A549 (cell line): ENCODE measurements at regions of chr12 and their contacts with region 1.

Region 1: DNA sequence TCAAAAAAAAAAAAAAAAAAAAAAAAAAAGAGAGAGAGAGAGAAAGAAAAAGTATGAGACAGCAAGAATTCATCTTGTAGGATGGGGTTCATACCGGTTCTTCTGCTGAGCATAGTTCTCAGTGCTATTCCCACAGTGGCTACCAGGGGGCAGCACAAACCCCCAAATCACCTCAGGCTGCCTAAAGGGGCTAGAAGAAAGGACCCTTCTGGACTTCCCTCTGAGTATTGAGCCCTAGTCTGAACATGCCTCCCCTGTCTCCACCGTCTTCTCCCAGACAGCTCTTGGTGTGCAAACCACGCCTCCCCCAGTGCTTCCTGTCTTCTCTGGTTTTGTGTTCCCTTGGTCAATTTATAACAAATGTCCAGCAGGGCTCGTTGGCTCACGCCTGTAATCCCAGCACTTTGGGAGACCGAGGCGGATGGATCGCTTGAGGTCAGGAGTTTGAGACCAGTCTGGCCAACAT is 31.3 kb upstream of the SMUG1 start:
- DNase-seq: peak; percentile 61 to 81
- ATAC-seq: peak; percentile 67 to 74
- H3K4me3 ChIP-seq: peak overlapping the region; percentile 27; the same call in 1 of the 3 replicates
- H3K27ac ChIP-seq: peak overlapping the region; percentile 37 to 66; a peak in 5 of 6 replicates
- H3K4me1 ChIP-seq: peaks cover 24% of the 10 kb centered on the region
- CTCF ChIP-seq: peak; percentile 81
- EP300 ChIP-seq: no peak
- POLR2A ChIP-seq: no peak
- RAD21 ChIP-seq: peak; percentile 79 to 82

Region 2: GRCh38 chr12:53999559-54000104 is 220.5 kb before region 1 on chr12:
- CTCF ChIA-PET with region 1: interaction called, 113 read pairs
- POLR2A ChIA-PET with region 1: no interaction called
- DNase-seq: peak; percentile 82 to 92
- ATAC-seq: peak; percentile 30 to 64; a peak in 5 of 6 replicates
- H3K4me3 ChIP-seq: peak overlapping the region; percentile 83
- H3K27ac ChIP-seq: peak overlapping the region; percentile 93 to 96
- H3K4me1 ChIP-seq: peaks cover 14% of the 10 kb centered on the region
- CTCF ChIP-seq: no peak
- EP300 ChIP-seq: no peak
- POLR2A ChIP-seq: no peak
- RAD21 ChIP-seq: no peak

Region 3: GRCh38 chr12:54207484-54208294 is 12.4 kb before region 1 on chr12:
- CTCF ChIA-PET with region 1: interaction called, 92 read pairs
- POLR2A ChIA-PET with region 1: no interaction called
- DNase-seq: peak; percentile 80 to 81
- ATAC-seq: peak; percentile 81 to 95
- H3K4me3 ChIP-seq: no peak overlapping the region
- H3K27ac ChIP-seq: no peak overlapping the region
- H3K4me1 ChIP-seq: no peaks in the 10 kb centered on the region
- CTCF ChIP-seq: peak; percentile 81
- EP300 ChIP-seq: no peak
- POLR2A ChIP-seq: no peak
- RAD21 ChIP-seq: peak; percentile 83 to 92

Region 4: DNA sequence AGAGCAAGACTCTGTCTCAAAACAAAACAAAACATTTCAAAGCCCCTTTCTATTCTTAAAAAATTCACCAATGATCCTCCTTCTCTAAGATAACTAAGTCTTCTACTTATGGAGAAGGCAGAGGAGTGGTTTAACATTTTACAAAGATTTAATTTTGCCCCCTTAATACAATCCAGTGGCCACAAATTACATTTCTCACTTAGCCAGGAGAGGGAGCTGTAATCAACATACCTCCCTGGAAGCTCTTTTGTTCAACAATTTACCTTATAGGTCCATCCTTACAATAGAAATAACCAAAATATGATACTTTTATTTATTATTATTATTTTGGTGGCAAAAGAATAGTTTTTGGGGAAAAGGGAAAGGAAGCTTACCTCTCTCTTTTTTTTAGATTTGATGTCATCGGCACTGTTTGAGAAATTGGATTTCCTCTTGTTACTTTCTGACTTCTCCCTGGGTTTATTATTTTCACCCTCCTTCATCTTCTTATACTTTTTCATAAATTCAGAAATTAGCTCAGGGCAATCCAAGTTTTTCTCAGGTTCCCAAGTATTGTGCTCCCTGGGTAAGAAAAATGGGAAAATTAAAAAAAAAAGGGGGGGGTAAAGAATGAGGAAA is 31.7 kb after region 1 on chr12:
- CTCF ChIA-PET with region 1: interaction called, 10 read pairs
- POLR2A ChIA-PET with region 1: interaction called, 9 read pairs
- DNase-seq: peak; percentile 51 to 69
- ATAC-seq: peak; percentile 73 to 86
- H3K4me3 ChIP-seq: no peak overlapping the region
- H3K27ac ChIP-seq: no peak overlapping the region
- H3K4me1 ChIP-seq: no peaks in the 10 kb centered on the region
- CTCF ChIP-seq: peak; percentile 80
- EP300 ChIP-seq: no peak
- POLR2A ChIP-seq: no peak
- RAD21 ChIP-seq: peak; percentile 64 to 65

Region 5: DNA sequence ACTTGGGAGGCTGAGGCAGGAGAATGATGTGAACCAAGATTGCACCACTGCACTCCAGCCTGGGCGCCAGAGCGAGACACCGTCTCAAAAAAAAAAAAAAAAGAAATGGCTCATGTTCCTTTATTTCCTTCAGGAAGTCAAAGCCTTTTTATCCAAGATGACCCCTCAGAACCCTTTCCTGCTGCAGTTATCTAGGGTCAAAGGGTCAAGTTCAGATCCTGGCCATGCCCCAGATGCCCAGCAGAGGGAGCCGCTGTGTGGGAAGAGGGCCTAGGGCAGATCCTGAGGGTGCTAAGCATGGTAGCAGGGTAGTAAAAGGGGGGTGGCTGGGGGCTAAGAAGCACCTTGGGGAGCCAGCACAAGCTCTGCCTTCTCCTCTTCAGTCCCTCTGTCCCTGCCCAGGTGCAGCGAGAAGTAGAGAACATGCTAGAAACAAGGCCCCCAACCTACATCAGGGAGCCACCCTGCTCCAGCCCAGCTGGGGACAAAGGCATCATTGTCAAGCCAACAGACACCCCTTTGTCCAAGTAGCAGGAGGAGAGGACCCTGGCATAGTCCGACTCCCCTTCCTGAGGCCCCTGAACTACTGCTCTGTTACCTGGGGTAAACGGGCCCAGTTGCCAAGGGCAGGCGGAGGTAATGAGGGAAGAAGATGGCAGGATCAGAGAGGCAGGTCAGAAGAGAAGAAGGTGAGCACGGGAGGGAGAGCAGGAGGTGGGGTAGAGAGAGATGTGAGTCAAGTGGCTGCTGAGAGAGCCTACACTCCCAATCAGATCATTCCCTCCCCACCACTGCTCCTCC is 74.2 kb after region 1 on chr12:
- CTCF ChIA-PET with region 1: interaction called, 21 read pairs
- POLR2A ChIA-PET with region 1: no interaction called
- DNase-seq: peak; percentile 68 to 83
- ATAC-seq: peak; percentile 31 to 51; a peak in 4 of 6 replicates
- H3K4me3 ChIP-seq: no peak overlapping the region
- H3K27ac ChIP-seq: no peak overlapping the region
- H3K4me1 ChIP-seq: no peaks in the 10 kb centered on the region
- CTCF ChIP-seq: peak; percentile 67
- EP300 ChIP-seq: no peak
- POLR2A ChIP-seq: no peak
- RAD21 ChIP-seq: peak; percentile 64 to 82

Region 6: GRCh38 chr12:54337280-54337842 is 117.2 kb after region 1 on chr12:
- CTCF ChIA-PET with region 1: interaction called, 26 read pairs
- POLR2A ChIA-PET with region 1: no interaction called
- DNase-seq: no peak
- ATAC-seq: no peak
- H3K4me3 ChIP-seq: no peak overlapping the region
- H3K27ac ChIP-seq: no peak overlapping the region
- H3K4me1 ChIP-seq: 0 out of 3 replicates have a peak, but pooled peaks cover 2% of the 10 kb centered on the region
- CTCF ChIP-seq: no peak
- EP300 ChIP-seq: no peak
- POLR2A ChIP-seq: no peak
- RAD21 ChIP-seq: no peak

Region 7: GRCh38 chr12:54368709-54369583 is 148.8 kb after region 1 on chr12:
- CTCF ChIA-PET with region 1: interaction called, 108 read pairs
- POLR2A ChIA-PET with region 1: no interaction called
- DNase-seq: peak; percentile 82 to 87
- ATAC-seq: peak; percentile 63 to 78
- H3K4me3 ChIP-seq: no peak overlapping the region
- H3K27ac ChIP-seq: peak overlapping the region; percentile 46 to 84
- H3K4me1 ChIP-seq: peaks cover 52% of the 10 kb centered on the region
- CTCF ChIP-seq: peak; percentile 91
- EP300 ChIP-seq: no peak
- POLR2A ChIP-seq: no peak
- RAD21 ChIP-seq: peak; percentile 86 to 94

Region 8: GRCh38 chr12:54535474-54535873 is 315.3 kb after region 1 on chr12:
- CTCF ChIA-PET with region 1: no interaction called
- POLR2A ChIA-PET with region 1: no interaction called
- DNase-seq: no peak
- ATAC-seq: no peak
- H3K4me3 ChIP-seq: no peak overlapping the region
- H3K27ac ChIP-seq: no peak overlapping the region
- H3K4me1 ChIP-seq: no peaks in the 10 kb centered on the region
- CTCF ChIP-seq: no peak
- EP300 ChIP-seq: no peak
- POLR2A ChIP-seq: no peak
- RAD21 ChIP-seq: no peak

Region 9: GRCh38 chr12:54824402-54824801 is 604.3 kb after region 1 on chr12:
- CTCF ChIA-PET with region 1: no interaction called
- POLR2A ChIA-PET with region 1: no interaction called
- DNase-seq: no peak
- ATAC-seq: 0 out of 6 replicates have a peak, but pooled peaks of 1 of the 2 experiments have one; percentile 49
- H3K4me3 ChIP-seq: no peak overlapping the region
- H3K27ac ChIP-seq: no peak overlapping the region
- H3K4me1 ChIP-seq: no peaks in the 10 kb centered on the region
- CTCF ChIP-seq: no peak
- EP300 ChIP-seq: no peak
- POLR2A ChIP-seq: no peak
- RAD21 ChIP-seq: no peak